ENCODE measurements at regions of chr6 and their contacts with region 1.

Region 1: GRCh38 chr6:38034274-38034914 is 214.9 kb downstream of the ZFAND3 start:
- DNase-seq: peak; percentile 18
- ATAC-seq: no peak
- H3K4me3 ChIP-seq: no peak overlapping the region
- H3K27ac ChIP-seq: no peak overlapping the region
- H3K4me1 ChIP-seq: peaks cover 21% of the 10 kb centered on the region
- H3K27me3 ChIP-seq: no peaks in the 10 kb centered on the region
- CTCF ChIP-seq: peak; percentile 59
- EP300 ChIP-seq: no peak
- POLR2A ChIP-seq: no peak
- RAD21 ChIP-seq: peak; percentile 42; the same call in 1 of the 2 replicates

Region 2: DNA sequence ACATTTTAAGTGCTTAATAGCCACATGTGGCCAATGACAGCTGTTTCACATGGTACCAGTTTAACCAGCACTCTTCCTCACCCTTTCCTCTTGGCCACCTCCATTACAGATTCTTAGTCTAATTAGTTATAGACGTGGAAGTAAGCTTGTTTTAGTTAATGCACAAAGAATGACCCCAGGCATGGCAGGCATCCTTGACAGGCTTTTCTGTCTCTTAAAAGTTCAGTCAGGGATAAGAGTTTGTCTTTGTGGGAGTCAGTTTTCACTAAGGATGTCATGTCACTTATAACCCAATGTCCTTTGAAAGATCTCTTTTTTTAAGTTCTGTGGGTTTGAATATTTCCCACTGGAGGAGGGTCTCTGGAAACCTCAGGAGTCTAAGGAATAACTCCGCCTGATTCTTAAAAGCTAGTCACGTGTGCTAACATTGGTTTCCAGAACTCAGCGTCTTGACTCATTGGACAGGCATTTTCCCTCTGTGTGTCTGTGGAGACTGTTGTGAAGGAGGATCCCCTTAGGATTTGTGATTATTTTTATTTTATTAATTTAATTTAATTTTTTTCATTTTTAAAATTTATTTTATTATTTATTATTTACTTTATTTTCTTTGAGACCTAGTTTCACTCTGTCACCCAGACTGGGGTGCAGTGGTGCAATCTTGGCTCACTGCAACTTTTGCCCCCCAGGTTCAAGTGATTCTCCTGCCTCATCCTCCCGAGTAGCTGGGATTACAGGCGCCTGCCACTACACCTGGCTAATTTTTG is 43.5 kb before region 1 on chr6:
- CTCF ChIA-PET with region 1: no interaction called
- POLR2A ChIA-PET with region 1: no interaction called
- in situ Hi-C with region 1: no loop called
- intact Hi-C with region 1: loop called (anchors 1 kb)
- DNase-seq: no peak
- ATAC-seq: no peak
- H3K4me3 ChIP-seq: no peak overlapping the region
- H3K27ac ChIP-seq: no peak overlapping the region
- H3K4me1 ChIP-seq: peaks cover 35% of the 10 kb centered on the region
- H3K27me3 ChIP-seq: no peaks in the 10 kb centered on the region
- CTCF ChIP-seq: no peak
- EP300 ChIP-seq: no peak
- POLR2A ChIP-seq: no peak
- RAD21 ChIP-seq: no peak

Measured in HepG2 (cell line).